Activated B cell treated with CpG ODN at 0.5 μM for 24 hours (primary cell): ENCODE measurements at regions of chr6 and their contacts with region 1.

Region 1: DNA sequence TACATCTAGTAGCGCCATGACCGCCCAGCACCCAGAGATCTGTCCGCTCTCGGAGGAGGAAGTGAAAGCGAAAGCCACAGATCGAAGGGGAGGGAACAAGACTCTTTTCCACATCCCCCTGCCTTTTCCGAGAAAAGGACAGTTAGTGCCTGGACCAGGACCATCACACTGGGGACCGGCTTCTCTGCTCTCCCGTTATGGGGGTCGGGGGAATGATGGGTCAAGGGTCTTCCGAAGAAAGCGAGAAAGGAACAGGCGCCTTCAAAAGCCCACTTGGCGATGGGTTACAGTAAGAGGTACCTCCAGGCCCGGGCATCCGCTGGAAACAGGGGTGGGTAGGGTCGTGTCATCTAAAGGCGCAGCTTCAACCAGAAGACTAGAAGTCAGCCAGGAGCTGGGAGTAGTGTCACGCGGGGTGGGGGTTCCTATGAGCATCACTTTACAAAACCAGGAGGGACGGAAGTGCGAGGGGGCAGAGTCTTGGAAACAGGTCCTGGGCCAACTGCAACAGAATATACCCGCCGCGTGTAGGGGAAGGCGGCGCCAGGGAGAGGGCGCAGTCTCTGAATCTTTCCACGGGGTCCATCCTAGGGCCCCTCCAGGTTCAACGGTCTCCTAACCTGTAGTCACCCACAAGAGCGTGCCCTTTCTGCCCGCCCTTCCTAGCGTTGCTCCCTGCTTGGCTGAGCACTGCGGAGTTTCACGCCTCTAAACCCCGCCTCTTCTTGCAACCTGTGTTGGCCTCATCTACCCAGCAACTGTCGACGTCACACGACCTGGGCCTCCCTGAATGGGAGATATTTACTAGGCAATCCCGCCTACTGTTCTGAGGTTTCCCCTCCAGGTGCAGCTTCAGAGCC is at the start of gene PSMB8:
- DNase-seq: peak; percentile 96
- ATAC-seq: peak; percentile 78
- H3K4me3 Mint-ChIP-seq: peak within 1 kb of the TSS; percentile 99
- H3K27ac Mint-ChIP-seq: peak within 1 kb of the TSS; percentile 100
- H3K4me1 Mint-ChIP-seq: peaks cover 92% of the 10 kb centered on the region
- H3K27me3 Mint-ChIP-seq: no peaks in the 10 kb centered on the region
- CTCF ChIP-seq: no peak
- total RNA-seq, gene PSMB8: 182 and 194 TPM in 2 replicates

Region 2: DNA sequence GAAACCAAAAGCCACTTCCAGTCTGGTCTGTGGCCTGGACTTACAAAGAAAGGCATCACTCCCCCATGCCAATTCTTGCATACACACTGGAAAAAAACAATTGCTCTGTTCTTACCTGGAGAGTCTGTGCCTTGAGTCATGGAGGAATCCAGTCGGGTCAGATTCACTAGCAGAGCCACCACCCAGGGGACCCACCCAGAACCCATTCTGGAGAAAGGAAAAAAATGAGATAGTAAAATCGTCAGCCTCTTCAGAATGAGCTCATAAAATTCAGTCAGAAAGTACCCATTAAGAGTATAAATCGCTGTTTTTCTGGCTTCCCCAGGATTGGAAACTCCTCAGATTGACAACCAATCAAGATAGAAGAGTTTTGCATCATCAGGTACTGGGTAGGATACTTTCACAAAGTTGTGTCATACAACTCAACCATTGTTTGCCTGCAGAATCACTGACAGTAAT is 27.4 kb before region 1 on chr6 and contains the start of gene HLA-DOB:
- CTCF ChIA-PET with region 1: interaction called, 18 read pairs
- POLR2A ChIA-PET with region 1: interaction called, 51 read pairs
- intact Hi-C with region 1: no loop called
- DNase-seq: no peak
- ATAC-seq: peak; percentile 73
- H3K4me3 Mint-ChIP-seq: peak within 1 kb of the TSS; percentile 99
- H3K27ac Mint-ChIP-seq: peak within 1 kb of the TSS; percentile 99
- H3K4me1 Mint-ChIP-seq: peaks cover 96% of the 10 kb centered on the region
- H3K27me3 Mint-ChIP-seq: no peaks in the 10 kb centered on the region
- CTCF ChIP-seq: no peak
- total RNA-seq, gene HLA-DOB: 95.6 and 101 TPM in 2 replicates

Region 3: DNA sequence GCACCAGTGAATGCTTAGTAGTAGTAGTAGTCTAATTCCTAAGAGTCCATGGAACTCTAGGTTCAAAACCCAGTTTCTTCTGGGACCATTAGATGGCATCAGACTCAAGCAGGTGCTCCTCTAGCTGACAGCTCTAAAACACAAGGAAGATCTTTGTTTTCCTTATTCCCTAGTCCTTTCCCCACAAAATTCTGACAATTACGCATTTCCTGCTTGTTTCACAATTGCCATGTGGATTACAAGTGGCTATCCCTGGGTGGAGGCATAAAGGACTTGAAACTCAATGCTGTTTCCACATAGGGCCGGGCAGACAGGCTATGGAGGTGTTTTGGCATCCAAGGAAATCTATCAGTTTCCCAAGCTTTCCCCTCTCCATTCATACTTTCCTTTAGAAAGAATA is 18.2 kb before region 1 on chr6:
- CTCF ChIA-PET with region 1: interaction called, 44 read pairs
- POLR2A ChIA-PET with region 1: interaction called, 29 read pairs
- intact Hi-C with region 1: no loop called
- DNase-seq: no peak
- ATAC-seq: no peak
- H3K4me3 Mint-ChIP-seq: no peak overlapping the region
- H3K27ac Mint-ChIP-seq: no peak overlapping the region
- H3K4me1 Mint-ChIP-seq: peaks cover 17% of the 10 kb centered on the region
- H3K27me3 Mint-ChIP-seq: no peaks in the 10 kb centered on the region
- CTCF ChIP-seq: no peak